ENCODE measurements at regions of chr17 and their contacts with region 1.

Region 1: GRCh38 chr17:781805-782731 is at the starts of genes GLOD4 and MRM3:
- DNase-seq: peak; percentile 97
- H3K4me3 ChIP-seq: peak within 1 kb of the TSS; percentile 98 to 99
- H3K27ac ChIP-seq: peak within 1 kb of the TSS; percentile 56 to 77
- H3K4me1 ChIP-seq: peaks cover 9 to 15% of the 10 kb centered on the region in 2 experiments
- H3K27me3 ChIP-seq: no peaks in the 10 kb centered on the region
- CTCF ChIP-seq: no peak; the same call in 1 of the 2 replicates
- EP300 ChIP-seq: no peak
- RAD21 ChIP-seq: no peak
- polyA plus RNA-seq, gene GLOD4: 34.3 and 40.0 TPM in 2 replicates
- polyA plus RNA-seq, gene MRM3: 16.4 and 17.4 TPM in 2 replicates

Region 2: DNA sequence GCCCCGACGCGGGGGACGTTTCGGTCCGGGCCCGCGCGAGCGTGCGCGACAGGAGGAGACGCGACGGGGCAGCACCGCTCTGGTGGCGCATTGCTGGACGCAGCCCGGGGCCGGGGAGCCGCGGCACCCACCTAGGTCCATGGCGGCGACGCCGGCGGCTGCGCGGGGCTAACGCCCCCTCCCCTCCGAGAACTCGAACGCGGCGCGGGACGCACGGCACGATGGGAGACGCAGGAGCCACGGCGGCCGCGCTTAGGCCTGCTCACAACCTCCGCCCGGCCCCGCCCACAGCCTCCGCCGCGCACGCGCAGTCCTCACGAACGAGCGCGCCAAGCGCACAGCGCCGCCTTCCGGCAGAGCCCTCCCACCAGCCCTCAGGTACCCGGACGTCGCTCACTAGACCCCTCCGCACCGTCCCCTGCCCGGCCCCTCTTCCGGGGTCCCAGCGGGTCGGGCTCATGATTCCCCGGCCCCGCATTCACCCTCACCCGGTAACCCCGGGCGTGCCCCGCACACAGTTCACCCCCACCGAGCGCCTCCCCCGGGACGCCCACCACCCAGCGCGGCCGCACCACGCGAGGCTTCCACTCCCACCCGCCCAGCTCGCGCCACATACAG is 30.0 kb before region 1 on chr17 and contains the start of gene GEMIN4:
- CTCF ChIA-PET with region 1: interaction called, 13 read pairs
- POLR2A ChIA-PET with region 1: interaction called, 4 read pairs
- DNase-seq: peak; percentile 99
- H3K4me3 ChIP-seq: peak within 1 kb of the TSS; percentile 77 to 84
- H3K27ac ChIP-seq: peak within 1 kb of the TSS in 1 of 2 experiments; percentile 62; a peak in 1 of 4 replicates
- H3K4me1 ChIP-seq: peaks cover 5 to 18% of the 10 kb centered on the region in 2 experiments; a peak in 2 of 4 replicates
- H3K27me3 ChIP-seq: no peaks in the 10 kb centered on the region
- CTCF ChIP-seq: peak; percentile 87
- EP300 ChIP-seq: no peak
- RAD21 ChIP-seq: peak; percentile 46
- polyA plus RNA-seq, gene GEMIN4: 10.7 and 12.5 TPM in 2 replicates

Measured in SK-N-SH (cell line).